Vagina (tissue), 2 donors: ENCODE measurements at regions of chr1 and their contacts with region 1.

Region 1: DNA sequence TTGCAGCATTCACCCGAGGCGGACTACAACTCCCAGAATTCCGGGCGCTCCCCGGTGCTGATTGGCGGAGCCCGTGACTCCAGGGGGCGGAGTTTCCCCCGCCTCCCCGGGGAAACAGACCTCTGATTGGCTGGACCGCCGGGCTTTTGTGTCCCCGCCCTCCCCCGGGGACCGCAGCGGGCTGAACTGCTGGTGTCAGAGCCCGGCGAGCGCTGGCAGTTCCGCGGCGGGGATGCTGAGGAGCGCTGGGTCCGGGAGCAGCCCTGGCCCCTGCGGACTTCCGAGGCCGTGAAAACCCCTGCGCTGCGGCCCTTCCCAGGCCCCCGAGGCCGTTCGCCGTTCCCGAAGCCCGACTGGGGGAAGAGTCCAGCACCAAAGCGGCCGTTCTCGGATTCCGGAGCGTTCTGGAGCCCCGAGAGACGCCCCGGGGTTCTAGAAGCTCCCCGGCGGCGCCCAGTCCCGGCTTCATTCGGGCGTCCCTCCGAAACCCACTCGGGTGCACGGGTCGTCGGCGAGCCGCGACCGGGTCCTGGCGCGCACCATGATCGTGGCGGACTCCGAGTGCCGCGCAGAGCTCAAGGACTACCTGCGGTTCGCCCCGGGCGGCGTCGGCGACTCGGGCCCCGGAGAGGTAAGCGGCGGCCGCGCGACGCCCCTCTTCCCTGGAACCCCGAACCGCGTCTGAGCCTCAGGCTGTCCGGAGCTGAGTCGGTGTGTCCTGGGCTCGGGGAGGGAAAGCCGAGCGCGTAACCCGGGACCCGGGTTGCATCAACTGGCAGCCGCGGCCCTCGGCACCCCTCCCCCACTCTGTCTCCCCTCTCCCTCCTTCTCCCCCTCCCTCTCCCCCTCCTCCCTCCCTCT is at the start of gene SESN2:
- DNase-seq: peak in 1 of 2 donors; percentile 100
- H3K4me3 ChIP-seq: peak within 1 kb of the TSS; percentile 99 to 100
- H3K27ac ChIP-seq: peak within 1 kb of the TSS; percentile 94
- H3K4me1 ChIP-seq: peaks cover 22% of the 10 kb centered on the region
- H3K27me3 ChIP-seq: no peaks in the 10 kb centered on the region
- CTCF ChIP-seq: peak in 1 of 3 experiments; percentile 8
- POLR2A ChIP-seq: peak; percentile 76 to 99
- total RNA-seq, gene SESN2: 14.7 TPM

Region 2: GRCh38 chr1:27713139-27713725 is 546.3 kb before region 1 on chr1:
- intact Hi-C with region 1: no loop called
- DNase-seq: no peak
- H3K4me3 ChIP-seq: no peak overlapping the region
- H3K27ac ChIP-seq: no peak overlapping the region
- H3K4me1 ChIP-seq: no peaks in the 10 kb centered on the region
- H3K27me3 ChIP-seq: no peaks in the 10 kb centered on the region
- CTCF ChIP-seq: no peak
- POLR2A ChIP-seq: no peak

Region 3: DNA sequence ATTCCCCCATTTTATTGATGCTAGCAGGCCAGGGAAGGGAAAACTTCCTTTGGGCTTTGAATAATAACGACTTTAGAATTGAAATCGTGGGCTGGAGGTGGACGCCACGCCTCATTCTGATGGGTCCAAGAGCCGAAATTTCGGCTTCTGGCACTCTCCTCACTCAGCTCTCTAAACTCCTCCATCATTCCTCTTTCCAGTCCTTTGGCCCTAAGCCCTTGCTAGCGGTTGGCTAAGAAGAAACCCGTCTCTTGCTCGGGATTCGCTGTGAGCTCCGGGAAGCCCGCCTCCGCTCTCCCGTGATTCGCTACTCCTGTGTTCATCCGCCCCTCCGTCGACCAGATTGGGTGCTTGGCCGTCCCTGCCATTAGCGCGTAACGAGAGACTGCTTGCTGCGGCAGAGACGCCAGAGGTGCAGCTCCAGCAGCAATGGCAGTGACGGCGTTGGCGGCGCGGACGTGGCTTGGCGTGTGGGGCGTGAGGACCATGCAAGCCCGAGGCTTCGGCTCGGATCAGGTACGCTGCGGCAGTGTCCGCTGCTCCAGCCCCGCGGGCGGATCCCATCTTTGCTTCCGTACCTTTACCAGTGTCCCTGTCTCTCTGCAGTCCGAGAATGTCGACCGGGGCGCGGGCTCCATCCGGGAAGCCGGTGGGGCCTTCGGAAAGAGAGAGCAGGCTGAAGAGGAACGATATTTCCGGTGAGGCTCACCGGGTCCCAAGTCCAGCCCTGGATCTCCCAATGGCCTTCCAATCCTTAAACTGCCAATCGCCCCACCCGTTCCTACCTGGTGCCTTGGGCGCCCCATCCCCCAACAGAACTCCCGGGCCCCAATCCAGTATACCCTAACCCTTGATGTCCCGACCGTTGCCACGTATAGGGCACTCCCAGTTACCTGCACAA is 23.5 kb before region 1 on chr1 and contains the start of gene ATP5IF1:
- intact Hi-C with region 1: loop called (anchors 2 kb)
- DNase-seq: peak in 1 of 2 donors; percentile 99
- H3K4me3 ChIP-seq: peak within 1 kb of the TSS; percentile 87 to 88
- H3K27ac ChIP-seq: peak within 1 kb of the TSS; percentile 87
- H3K4me1 ChIP-seq: peaks cover 39% of the 10 kb centered on the region
- H3K27me3 ChIP-seq: no peaks in the 10 kb centered on the region
- CTCF ChIP-seq: no peak
- POLR2A ChIP-seq: peak; percentile 25 to 93
- total RNA-seq, gene ATP5IF1: 224 TPM